Left cardiac atrium (tissue), 4 donors: ENCODE measurements at regions of chr7 and their contacts with region 1.

Region 1: GRCh38 chr7:150631866-150632864 is at the start of gene GIMAP6:
- DNase-seq: peak; percentile 45
- ATAC-seq: peak in 1 of 2 donors; percentile 63
- total RNA-seq, gene GIMAP6: 35.4 to 36.8 TPM

Region 2: DNA sequence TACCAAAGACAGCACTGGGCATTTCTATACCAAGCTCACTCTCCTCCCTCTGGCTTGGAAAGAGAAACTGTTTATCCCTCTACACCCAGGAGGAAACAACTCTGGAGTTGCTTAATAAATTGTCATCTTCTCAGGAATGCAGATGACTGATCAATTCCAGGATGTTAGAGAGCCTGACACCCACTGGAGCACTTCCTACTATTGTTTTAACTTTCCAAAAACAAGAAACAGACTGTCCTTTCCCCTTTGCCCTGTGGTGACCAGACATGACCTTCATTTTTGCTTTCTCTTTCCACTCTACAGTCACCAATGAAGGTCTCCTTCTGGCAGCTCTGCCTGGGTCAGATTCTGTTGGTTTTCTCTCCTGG is 45.4 kb before region 1 on chr7:
- intact Hi-C with region 1: loop called in 1 of 2 experiments (anchors 5 kb)
- DNase-seq: no peak
- ATAC-seq: peak; percentile 83 to 90

Region 3: DNA sequence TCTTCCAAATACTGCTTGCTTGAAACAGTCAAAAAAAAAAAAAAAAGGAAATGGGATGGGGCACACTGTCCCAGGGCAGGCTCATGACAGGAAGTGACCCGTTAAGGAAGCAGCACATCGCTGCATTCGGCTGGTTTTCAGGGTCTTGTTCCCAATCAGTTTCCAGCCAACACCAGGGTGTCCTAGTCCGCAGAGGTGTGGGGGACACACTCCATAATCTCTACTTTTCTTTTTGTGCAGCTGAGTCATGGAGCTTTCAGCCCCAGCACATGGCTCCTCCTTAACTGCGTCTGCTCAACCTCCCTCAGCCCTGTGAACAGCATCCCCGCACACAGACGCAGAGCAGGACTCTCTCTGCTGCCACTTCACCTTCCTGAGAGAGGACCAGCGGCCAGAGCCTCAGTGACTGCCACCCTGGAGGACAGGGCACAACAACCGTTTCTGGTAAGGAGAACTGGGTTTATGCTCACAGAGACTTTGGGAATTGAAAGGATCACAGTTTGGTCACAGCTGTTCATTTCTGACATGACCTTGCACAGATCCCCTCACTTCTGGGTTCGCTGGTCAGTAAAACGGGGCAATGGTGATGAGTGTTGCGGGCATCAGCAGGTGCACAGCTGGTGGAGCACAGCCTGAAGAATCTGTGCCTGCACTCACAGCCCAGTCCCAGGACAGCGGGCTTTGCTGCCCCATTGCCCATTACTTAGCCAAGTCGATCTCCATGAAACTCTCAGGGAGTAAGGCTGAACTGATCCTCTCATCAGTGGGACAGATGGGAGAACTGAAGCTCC is 105.3 kb after region 1 on chr7 and contains the start of gene GIMAP5:
- intact Hi-C with region 1: loop called in 1 of 2 experiments (anchors 5 kb)
- DNase-seq: peak; percentile 32
- ATAC-seq: peak; percentile 59 to 77
- total RNA-seq, gene GIMAP5: 18.6 to 25.6 TPM

Region 4: GRCh38 chr7:150748376-150748775 is 116.2 kb after region 1 on chr7:
- intact Hi-C with region 1: loop called in 1 of 2 experiments (anchors 5 kb)
- DNase-seq: no peak
- ATAC-seq: no peak